ENCODE measurements at regions of chr17 and their contacts with region 1.

Region 1: GRCh38 chr17:8189711-8190477 is at the start of gene BORCS6:
- DNase-seq: peak; percentile 97
- H3K4me3 ChIP-seq: peak within 1 kb of the TSS; percentile 62 to 85 (median 80)
- H3K27ac ChIP-seq: peak within 1 kb of the TSS; percentile 52
- H3K4me1 ChIP-seq: peaks cover 31% of the 10 kb centered on the region
- H3K27me3 ChIP-seq: no peaks in the 10 kb centered on the region
- CTCF ChIP-seq: peak in 1 of 2 donors; percentile 9
- total RNA-seq, gene BORCS6: 4.9 to 8.8 TPM

Region 2: DNA sequence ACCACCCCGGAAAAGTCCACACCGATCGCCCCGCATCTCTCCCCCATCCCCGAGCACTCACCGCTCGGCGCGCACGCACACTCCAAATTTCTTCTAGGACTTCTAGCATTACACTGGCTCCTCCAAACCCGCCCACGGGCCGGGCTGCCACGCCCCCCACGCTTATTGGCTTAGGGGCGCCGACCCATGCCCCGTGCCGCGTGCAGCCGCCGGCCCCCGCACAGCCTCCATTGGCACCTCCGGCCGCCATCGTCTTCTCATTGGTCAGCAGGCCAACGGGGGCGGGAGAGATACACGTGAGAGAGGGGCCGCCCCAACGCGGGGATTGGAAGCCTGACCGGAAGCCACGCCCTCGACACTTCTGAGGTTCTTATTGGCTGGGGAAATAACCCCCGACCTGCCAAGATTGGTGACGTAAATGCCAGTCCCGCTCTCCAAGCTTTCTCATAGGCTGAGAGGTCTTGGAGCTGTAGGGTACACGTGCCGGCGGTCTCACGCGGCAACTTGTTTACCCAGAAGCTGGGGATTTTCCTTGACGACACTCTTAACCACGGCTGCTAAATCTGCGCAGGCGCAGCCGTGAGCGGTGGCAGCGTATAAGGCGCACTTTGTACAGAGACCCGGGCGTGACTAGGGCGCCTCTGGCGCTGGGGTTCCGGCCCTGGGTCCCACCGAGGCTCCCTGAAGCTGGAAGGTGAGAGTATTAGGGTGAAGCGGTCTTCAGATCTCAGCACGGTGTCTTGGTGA is 33.5 kb before region 1 on chr17:
- CTCF ChIA-PET with region 1: no interaction called
- dilution Hi-C with region 1: no loop called
- in situ Hi-C with region 1: no loop called
- intact Hi-C with region 1: loop called (anchors 1 kb)
- DNase-seq: peak; percentile 100
- H3K4me3 ChIP-seq: peak overlapping the region; percentile 85 to 92 (median 88)
- H3K27ac ChIP-seq: peak overlapping the region; percentile 100
- H3K4me1 ChIP-seq: peaks cover 34% of the 10 kb centered on the region
- H3K27me3 ChIP-seq: no peaks in the 10 kb centered on the region
- CTCF ChIP-seq: peak in 1 of 2 donors; percentile 18

Region 3: DNA sequence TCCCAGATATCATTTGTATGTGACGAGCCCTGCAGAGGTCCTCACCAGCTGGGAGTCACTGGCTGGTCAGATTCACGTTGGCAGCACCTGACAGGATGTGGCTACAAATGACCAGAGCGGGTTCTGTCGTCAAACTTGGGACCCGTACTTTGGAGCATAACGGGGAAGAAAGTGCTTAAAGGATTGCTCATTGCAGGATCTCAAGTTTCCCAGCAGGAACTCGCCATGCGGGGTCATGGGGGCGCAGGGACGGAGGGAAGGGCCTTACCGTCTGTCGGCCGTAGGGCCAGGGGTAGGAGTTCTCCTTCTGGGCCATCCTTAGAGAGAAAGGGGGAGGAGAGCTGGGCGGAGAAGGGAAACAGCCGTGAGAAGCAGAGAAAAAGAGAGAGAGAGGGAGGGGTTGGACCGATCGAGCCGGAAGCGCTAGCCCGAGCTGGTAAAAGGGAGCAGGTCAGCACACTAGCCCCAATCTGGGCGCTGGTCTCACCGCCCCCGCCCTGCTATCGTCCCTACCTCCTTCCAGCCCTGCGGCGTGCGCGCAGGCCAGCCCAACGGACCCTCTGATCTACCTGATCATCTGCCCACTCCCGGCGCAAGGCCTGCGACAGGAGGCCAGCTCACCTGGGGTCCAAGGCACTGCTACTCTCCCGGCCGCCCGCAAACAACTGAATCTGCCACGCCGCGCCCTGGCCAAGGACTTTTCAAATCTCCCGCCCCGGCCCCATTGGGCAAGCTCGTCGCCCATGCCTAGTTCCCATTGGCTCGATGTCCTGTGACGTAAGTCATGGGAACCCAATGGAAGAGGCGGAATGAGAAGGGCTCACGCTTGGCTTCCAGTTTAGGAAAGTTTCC is 20.2 kb after region 1 on chr17 and contains the start of gene AURKB:
- CTCF ChIA-PET with region 1: no interaction called
- dilution Hi-C with region 1: no loop called
- in situ Hi-C with region 1: no loop called
- intact Hi-C with region 1: loop called (anchors 1 kb)
- DNase-seq: peak; percentile 96
- H3K4me3 ChIP-seq: peak within 1 kb of the TSS; percentile 67 to 99 (median 90)
- H3K27ac ChIP-seq: peak within 1 kb of the TSS; percentile 90
- H3K4me1 ChIP-seq: peaks cover 22% of the 10 kb centered on the region
- H3K27me3 ChIP-seq: no peaks in the 10 kb centered on the region
- CTCF ChIP-seq: no peak
- total RNA-seq, gene AURKB: 1.8 to 59.3 TPM

Region 4: GRCh38 chr17:8248751-8249607 is 59.1 kb after region 1 on chr17 and contains the start of gene PFAS:
- CTCF ChIA-PET with region 1: no interaction called
- dilution Hi-C with region 1: no loop called
- in situ Hi-C with region 1: loop called in 1 of 2 experiments (anchors 10 kb)
- intact Hi-C with region 1: loop called (anchors 1 kb)
- DNase-seq: peak; percentile 93
- H3K4me3 ChIP-seq: peak within 1 kb of the TSS; percentile 82 to 96 (median 89)
- H3K27ac ChIP-seq: peak within 1 kb of the TSS; percentile 92
- H3K4me1 ChIP-seq: peaks cover 12% of the 10 kb centered on the region
- H3K27me3 ChIP-seq: no peaks in the 10 kb centered on the region
- CTCF ChIP-seq: no peak
- total RNA-seq, gene PFAS: 8.5 to 31.2 TPM

Measured in mammary epithelial cell (primary cell).